IMR-90 (cell line): ENCODE measurements at regions of chr19 and their contacts with region 1.

Region 1: GRCh38 chr19:18856385-18857126 is 24.8 kb downstream of the UPF1 start:
- DNase-seq: no peak
- ATAC-seq: peak; percentile 69
- H3K4me3 ChIP-seq: no peak overlapping the region
- H3K27ac ChIP-seq: no peak overlapping the region
- H3K4me1 ChIP-seq: no peaks in the 10 kb centered on the region
- H3K27me3 ChIP-seq: no peaks in the 10 kb centered on the region
- CTCF ChIP-seq: peak; percentile 25; the same call in 1 of the 2 replicates
- POLR2A ChIP-seq: no peak
- RAD21 ChIP-seq: 0 out of 2 replicates have a peak, but pooled peaks have one; percentile 31

Region 2: DNA sequence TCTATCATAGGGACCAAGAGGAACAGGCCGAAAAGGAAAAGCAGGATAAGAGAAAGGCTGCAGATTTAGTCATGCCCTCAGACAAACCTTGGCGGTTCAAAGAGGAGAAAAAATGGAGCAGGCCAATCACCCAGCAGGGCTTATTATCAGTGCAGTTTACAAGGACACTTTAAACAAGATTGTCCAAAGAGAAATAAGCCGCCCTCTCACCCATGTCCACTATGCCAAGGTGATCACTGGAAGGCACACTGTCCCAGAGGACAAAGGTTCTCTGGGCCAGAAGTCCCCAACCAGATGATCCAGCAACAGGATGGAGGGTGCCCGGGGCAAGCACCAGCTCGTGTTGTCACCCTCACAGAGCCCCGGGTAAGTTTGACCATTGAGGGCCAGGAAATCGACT is 276.2 kb before region 1 on chr19:
- CTCF ChIA-PET with region 1: no interaction called
- POLR2A ChIA-PET with region 1: no interaction called
- dilution Hi-C with region 1: no loop called
- in situ Hi-C with region 1: loop called (anchors 5 kb)
- intact Hi-C with region 1: no loop called
- DNase-seq: no peak
- ATAC-seq: no peak
- H3K4me3 ChIP-seq: no peak overlapping the region
- H3K27ac ChIP-seq: no peak overlapping the region
- H3K4me1 ChIP-seq: no peaks in the 10 kb centered on the region
- H3K27me3 ChIP-seq: peaks cover 2% of the 10 kb centered on the region; the same call in 1 of the 2 replicates
- CTCF ChIP-seq: no peak
- POLR2A ChIP-seq: no peak
- RAD21 ChIP-seq: no peak

Region 3: DNA sequence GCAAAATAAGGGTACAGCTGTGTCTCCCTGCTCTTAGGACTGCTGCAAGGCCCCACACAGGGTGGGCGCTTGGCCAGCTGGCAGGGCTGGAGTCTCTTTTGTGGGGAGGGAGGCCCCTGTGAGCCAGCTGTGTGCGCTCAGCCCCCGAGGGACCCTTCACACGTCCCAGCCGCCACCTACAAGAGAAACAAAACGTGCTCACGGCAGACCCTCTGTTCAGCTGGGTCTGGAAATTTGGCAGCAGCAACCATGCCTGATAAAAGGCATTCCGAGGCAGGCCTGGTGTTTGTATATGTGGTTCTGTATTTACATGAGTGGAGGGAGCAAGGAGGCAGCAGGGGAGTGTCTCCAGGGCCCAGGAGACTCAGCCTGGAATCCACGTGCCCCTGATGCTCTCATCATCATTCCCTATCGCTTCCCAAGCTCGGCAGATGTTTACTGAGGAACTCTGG is 123.3 kb before region 1 on chr19:
- CTCF ChIA-PET with region 1: no interaction called
- POLR2A ChIA-PET with region 1: no interaction called
- dilution Hi-C with region 1: no loop called
- in situ Hi-C with region 1: no loop called
- intact Hi-C with region 1: no loop called
- DNase-seq: peak; percentile 93
- ATAC-seq: peak; percentile 99
- H3K4me3 ChIP-seq: no peak overlapping the region
- H3K27ac ChIP-seq: peak overlapping the region; percentile 6; the same call in 1 of the 2 replicates
- H3K4me1 ChIP-seq: peaks cover 11% of the 10 kb centered on the region; the same call in 1 of the 2 replicates
- H3K27me3 ChIP-seq: no peaks in the 10 kb centered on the region
- CTCF ChIP-seq: no peak
- POLR2A ChIP-seq: no peak
- RAD21 ChIP-seq: 0 out of 2 replicates have a peak, but pooled peaks have one; percentile 18

Region 4: DNA sequence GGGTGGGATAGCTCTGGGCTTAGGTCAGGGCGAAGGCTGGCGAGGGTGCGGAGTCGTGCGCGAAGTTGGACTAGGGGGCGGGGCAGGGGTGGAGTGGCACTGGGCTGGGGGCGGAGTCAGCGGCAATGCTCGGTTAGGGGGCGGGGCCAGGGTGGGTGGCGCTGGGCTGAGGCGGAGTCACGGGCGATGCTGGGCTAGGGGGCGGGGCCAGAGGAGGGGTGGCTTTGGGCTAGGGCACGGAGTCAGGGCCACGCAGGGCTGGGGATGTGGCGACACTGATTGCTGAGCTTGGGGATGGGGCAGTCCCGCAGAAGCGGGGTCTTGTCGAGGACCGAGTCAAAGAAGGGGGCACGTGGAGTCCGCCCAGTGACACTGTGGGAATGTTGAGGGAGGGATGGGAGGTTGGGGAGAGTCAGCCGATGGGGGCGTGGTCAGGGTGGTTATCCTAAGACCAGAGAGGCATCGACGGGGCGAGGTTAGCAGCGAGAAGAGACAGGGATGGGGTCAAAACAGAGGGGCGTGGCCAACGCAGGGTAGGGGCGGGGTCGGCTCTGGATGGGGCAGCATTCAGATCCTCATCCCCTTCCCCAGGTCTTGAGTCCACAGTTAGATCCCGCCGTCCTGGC is 75.8 kb after region 1 on chr19:
- CTCF ChIA-PET with region 1: no interaction called
- POLR2A ChIA-PET with region 1: no interaction called
- dilution Hi-C with region 1: no loop called
- in situ Hi-C with region 1: no loop called
- intact Hi-C with region 1: no loop called
- DNase-seq: no peak
- ATAC-seq: peak; percentile 93
- H3K4me3 ChIP-seq: no peak overlapping the region
- H3K27ac ChIP-seq: no peak overlapping the region
- H3K4me1 ChIP-seq: no peaks in the 10 kb centered on the region
- H3K27me3 ChIP-seq: no peaks in the 10 kb centered on the region
- CTCF ChIP-seq: no peak
- POLR2A ChIP-seq: no peak
- RAD21 ChIP-seq: no peak